Mammary epithelial cell (primary cell): ENCODE measurements at regions of chr12 and their contacts with region 1.

Region 1: GRCh38 chr12:113196996-113197395 is 11.5 kb downstream of the RITA1 start:
- DNase-seq: peak; percentile 63
- H3K4me3 ChIP-seq: no peak overlapping the region
- H3K27ac ChIP-seq: no peak overlapping the region
- H3K4me1 ChIP-seq: peaks cover 11% of the 10 kb centered on the region
- H3K27me3 ChIP-seq: no peaks in the 10 kb centered on the region
- CTCF ChIP-seq: peak; percentile 77 to 84

Region 2: GRCh38 chr12:113152835-113153814 is 43.9 kb before region 1 on chr12:
- CTCF ChIA-PET with region 1: no interaction called
- dilution Hi-C with region 1: no loop called
- in situ Hi-C with region 1: no loop called
- intact Hi-C with region 1: no loop called
- DNase-seq: peak; percentile 79
- H3K4me3 ChIP-seq: peak overlapping the region; percentile 46 to 60 (median 46)
- H3K27ac ChIP-seq: no peak overlapping the region
- H3K4me1 ChIP-seq: peaks cover 25% of the 10 kb centered on the region
- H3K27me3 ChIP-seq: no peaks in the 10 kb centered on the region
- CTCF ChIP-seq: peak; percentile 3 to 69

Region 3: DNA sequence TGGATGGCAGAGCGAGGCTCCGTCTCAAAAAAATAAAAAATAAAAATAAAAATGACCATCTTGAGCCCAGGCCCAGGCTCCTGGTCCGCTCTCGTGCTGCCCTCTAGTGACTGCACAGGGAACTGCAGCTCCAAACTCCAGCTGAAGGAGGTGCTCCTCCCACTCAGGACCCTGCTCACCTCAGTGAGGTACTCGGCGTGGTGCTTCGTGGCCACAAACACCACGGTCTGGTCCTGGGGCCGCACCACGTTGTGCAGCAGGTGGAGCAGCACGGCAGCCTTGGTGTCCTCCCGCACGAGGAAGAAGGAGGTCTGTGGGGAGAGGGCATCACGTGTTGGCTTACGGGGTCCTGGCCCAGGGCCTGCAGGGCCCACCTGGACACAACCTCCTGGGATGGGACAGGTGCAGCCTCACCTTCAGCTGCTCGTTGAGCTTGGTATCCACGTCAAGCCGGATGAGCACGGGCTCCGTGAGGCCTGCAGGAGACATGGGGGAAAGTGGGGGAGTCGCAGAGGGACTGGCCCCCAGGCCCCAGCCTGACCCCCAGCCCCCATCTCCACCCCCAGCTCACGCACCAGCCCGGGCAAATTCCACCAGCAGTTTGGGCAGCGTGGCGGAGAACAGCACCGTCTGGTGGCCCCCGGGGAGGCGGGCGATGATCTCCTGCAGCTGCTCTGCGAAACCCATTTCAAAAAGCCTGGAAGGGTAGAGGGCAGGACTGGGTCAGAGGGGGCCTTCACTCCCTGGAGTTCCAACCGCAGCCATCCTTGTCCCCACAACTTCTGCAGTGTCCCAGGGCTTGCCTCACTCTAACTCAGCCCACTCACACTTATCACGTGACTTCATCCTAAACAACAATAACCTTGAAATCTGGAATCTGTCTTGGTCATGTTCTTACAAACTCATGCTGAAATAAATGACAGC is 22.3 kb before region 1 on chr12:
- CTCF ChIA-PET with region 1: interaction called, 13 read pairs
- dilution Hi-C with region 1: no loop called
- in situ Hi-C with region 1: no loop called
- intact Hi-C with region 1: no loop called
- DNase-seq: peak; percentile 27
- H3K4me3 ChIP-seq: no peak overlapping the region
- H3K27ac ChIP-seq: no peak overlapping the region
- H3K4me1 ChIP-seq: no peaks in the 10 kb centered on the region
- H3K27me3 ChIP-seq: no peaks in the 10 kb centered on the region
- CTCF ChIP-seq: peak; percentile 97 to 98

Region 4: DNA sequence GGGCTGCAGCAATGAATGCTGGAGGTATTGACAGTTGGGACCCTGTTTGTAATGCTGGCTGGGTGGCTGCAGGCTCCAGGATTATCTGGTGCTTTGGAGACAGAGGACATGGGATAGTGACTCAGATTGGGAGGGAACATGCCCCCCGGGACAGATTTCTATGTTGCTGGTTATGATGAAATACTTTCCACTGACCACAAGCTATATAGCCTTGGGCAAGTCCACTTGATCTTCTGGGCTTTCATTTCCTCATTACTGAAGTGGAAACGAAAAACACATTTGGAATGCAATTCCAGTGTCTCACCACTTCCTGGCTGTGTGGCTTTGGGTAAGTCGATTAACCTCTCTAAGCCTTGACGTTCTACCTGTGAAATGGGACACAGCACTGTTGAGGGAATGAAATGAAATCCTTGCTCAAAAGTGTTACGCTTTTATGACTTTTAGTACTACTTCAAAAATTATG is 18.0 kb after region 1 on chr12:
- CTCF ChIA-PET with region 1: no interaction called
- dilution Hi-C with region 1: no loop called
- in situ Hi-C with region 1: no loop called
- intact Hi-C with region 1: loop called (anchors 2 kb)
- DNase-seq: peak; percentile 95
- H3K4me3 ChIP-seq: no peak overlapping the region
- H3K27ac ChIP-seq: peak overlapping the region; percentile 38
- H3K4me1 ChIP-seq: peaks cover 18% of the 10 kb centered on the region
- H3K27me3 ChIP-seq: no peaks in the 10 kb centered on the region
- CTCF ChIP-seq: no peak

Region 5: DNA sequence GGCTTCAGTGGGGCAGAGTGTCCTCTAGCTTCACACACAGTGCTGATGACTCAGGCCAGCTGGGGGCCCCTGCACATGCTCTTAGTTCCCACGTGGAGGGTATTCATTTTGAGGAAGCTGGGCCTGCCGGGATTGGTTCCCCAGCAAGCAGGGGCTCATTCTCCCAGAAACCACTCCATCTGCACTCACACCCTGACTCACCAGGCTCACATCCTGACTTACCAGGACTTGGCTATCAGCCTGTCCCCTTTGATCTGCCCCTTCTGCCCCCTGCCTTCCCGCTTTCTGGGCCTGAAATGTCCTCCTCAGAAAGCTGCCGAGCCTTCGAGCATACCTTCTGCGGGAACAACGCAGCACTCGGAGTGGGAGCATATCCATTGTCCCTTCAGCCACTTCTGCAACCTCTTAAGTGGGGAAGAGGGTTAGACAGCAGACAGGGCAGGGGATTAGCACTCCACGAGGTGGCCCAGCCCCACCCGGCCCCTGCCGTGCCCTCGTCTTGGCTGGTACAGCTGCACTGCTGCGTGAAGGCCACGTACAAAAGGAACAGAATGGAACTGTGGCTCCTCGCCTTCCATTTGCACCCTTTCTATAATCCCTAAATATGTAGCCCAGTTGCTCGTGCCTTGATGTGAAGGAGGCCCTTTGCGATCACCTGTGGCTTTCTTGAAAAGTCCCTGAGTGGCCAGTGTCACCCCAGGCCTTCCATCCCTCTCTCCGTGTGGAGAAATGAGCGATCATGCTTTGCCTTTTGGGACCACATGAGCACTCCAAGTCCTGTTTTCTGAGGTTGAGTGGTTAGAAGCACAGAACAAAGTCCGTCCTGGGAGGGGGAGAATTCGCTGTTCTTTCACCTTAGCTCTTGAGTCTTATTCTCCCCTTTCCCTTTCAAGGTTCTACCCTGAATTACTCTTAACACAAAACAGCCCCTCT is 50.4 kb after region 1 on chr12:
- CTCF ChIA-PET with region 1: no interaction called
- dilution Hi-C with region 1: no loop called
- in situ Hi-C with region 1: no loop called
- intact Hi-C with region 1: no loop called
- DNase-seq: peak; percentile 48
- H3K4me3 ChIP-seq: no peak overlapping the region
- H3K27ac ChIP-seq: peak overlapping the region; percentile 96
- H3K4me1 ChIP-seq: peaks cover 49% of the 10 kb centered on the region
- H3K27me3 ChIP-seq: no peaks in the 10 kb centered on the region
- CTCF ChIP-seq: no peak

Region 6: GRCh38 chr12:113310489-113310888 is 113.5 kb after region 1 on chr12:
- CTCF ChIA-PET with region 1: no interaction called
- dilution Hi-C with region 1: no loop called
- in situ Hi-C with region 1: no loop called
- intact Hi-C with region 1: loop called (anchors 1 kb)
- DNase-seq: peak; percentile 32
- H3K4me3 ChIP-seq: no peak overlapping the region
- H3K27ac ChIP-seq: no peak overlapping the region
- H3K4me1 ChIP-seq: no peaks in the 10 kb centered on the region
- H3K27me3 ChIP-seq: no peaks in the 10 kb centered on the region
- CTCF ChIP-seq: peak in 1 of 2 donors; percentile 15

Region 7: DNA sequence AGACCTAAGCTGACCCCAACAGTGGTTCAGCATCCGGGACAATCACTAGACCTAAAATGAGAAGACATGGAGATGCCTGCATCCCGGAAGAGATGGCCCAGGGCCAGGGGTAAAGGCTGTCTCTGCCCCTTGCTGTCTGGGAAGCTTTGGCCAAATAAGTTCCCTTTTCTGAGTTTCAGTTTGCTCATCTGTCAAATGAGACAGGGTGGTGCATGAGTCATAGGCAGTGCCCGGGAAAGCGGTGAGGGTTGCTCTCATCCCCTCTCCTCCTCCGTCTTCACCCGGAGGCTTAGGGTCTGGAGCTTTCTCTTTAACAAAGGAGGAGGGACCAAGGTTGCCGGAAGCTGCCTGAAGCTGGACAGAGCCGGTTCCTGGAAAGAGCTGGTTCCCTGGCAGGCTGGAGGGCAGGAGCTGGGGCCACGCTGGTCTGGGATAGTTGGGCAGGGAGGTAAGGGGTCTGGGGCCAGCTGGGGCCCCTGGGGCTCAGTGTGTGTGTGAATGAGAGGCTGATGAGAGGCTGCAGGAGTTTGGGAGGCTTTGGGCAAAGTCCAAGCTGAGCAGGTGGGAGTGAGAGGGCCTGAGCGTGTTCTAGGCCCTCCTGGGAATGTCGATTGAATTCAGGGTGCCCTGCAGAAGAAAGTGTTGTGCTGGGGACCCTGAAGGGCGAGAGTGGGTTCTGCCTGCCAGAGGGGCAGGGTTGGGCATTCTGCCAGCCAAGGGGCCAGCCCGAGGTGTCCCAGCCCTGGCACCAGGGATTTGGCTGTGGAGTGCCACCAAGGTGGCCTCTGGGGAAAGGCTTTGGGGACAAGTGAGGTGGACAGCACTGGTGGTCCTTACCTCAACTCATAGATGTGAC is 225.3 kb after region 1 on chr12 and contains the start of gene SDSL:
- CTCF ChIA-PET with region 1: no interaction called
- dilution Hi-C with region 1: no loop called
- in situ Hi-C with region 1: loop called (anchors 5 to 10 kb)
- intact Hi-C with region 1: loop called (anchors 1 kb)
- DNase-seq: peak; percentile 91
- H3K4me3 ChIP-seq: peak within 1 kb of the TSS; percentile 50 to 65 (median 62)
- H3K27ac ChIP-seq: peak within 1 kb of the TSS; percentile 27
- H3K4me1 ChIP-seq: peaks cover 5% of the 10 kb centered on the region
- H3K27me3 ChIP-seq: no peaks in the 10 kb centered on the region
- CTCF ChIP-seq: no peak
- total RNA-seq, gene SDSL: 5.7 to 10.8 TPM